BJ (cell line): ENCODE measurements at regions of chr14 and their contacts with region 1.

Region 1: DNA sequence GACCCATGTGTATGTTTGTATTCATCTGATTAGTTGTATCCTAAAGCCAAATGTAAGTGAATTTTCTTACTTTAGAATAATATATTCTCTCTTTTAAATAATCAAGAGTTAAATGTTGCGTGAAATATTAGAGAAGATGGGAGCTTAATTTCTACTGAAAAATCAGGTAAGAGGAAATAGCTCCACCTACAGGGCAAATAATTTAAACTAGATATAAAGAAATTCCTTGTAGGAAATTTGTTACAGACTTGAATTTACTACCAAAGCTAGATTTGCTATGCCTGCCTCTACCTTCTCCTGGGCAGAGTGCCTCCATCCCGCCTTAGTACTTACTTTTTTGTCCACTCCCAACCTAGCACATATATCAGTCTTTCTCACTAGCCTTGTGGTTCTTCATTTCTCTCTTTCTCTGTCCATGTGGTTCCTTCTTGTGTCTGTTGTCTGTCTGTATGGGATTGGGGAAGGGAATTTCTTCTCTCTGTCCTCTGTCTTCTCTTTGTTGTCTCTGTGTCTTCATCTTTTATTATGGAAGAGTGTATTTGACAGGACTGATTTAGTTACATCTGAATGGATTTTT is 44.7 kb downstream of the PALS1 start:
- DNase-seq: no peak
- H3K4me3 ChIP-seq: no peak overlapping the region
- H3K27me3 ChIP-seq: no peaks in the 10 kb centered on the region
- CTCF ChIP-seq: peak; percentile 37

Region 2: GRCh38 chr14:67166450-67166853 is 119.5 kb before region 1 on chr14:
- CTCF ChIA-PET with region 1: interaction called, 84 read pairs
- POLR2A ChIA-PET with region 1: no interaction called
- DNase-seq: no peak
- H3K4me3 ChIP-seq: no peak overlapping the region
- H3K27me3 ChIP-seq: no peaks in the 10 kb centered on the region
- CTCF ChIP-seq: peak; percentile 80

Region 3: DNA sequence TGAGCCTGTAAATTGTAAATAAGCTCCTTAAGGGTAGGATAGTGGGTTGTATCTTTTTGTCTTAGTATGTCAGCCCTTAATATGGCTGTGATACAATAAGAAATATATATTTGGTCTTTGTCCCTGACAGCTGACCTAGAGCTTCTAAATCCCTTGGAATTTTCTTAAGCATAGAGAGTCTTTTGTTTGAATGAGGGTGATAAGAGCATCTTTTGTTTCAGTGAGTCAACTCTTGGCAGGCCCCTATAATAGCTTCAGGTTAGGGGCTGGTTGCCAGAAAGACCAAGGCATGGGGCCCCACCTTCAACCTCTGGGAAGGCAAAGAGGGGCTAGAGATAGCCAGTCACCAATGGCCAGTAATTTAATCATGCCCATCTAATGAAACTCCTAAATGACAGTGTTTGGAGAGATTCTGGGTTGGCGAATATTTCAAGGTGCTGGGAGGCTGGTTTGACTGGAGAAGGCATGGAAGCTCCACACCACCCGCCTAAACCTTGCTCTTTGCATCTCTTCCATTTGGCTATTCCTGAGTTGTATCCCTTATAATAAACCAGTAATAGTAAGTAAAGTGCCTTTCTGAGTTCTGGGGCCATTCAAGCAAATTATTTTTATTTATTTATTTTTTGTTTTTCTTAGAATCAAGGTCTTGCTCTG is 34.3 kb before region 1 on chr14:
- CTCF ChIA-PET with region 1: interaction called, 10 read pairs
- POLR2A ChIA-PET with region 1: no interaction called
- DNase-seq: no peak
- H3K4me3 ChIP-seq: no peak overlapping the region
- H3K27me3 ChIP-seq: no peaks in the 10 kb centered on the region
- CTCF ChIP-seq: no peak